Aorta (tissue), 5 donors: ENCODE measurements at regions of chr12 and their contacts with region 1.

Region 1: GRCh38 chr12:130427381-130427887 is 89.7 kb downstream of the PIWIL1 start:
- DNase-seq: peak in 1 of 2 donors; percentile 29
- ATAC-seq: no peak
- H3K4me3 ChIP-seq: no peak overlapping the region
- H3K27ac ChIP-seq: no peak overlapping the region
- H3K4me1 ChIP-seq: no peaks in the 10 kb centered on the region
- H3K27me3 ChIP-seq: no peaks in the 10 kb centered on the region

Region 2: GRCh38 chr12:130413909-130414308 is 13.5 kb before region 1 on chr12:
- intact Hi-C with region 1: loop called in 1 of 2 experiments (anchors 1 kb)
- DNase-seq: no peak
- ATAC-seq: no peak
- H3K4me3 ChIP-seq: no peak overlapping the region
- H3K27ac ChIP-seq: no peak overlapping the region
- H3K4me1 ChIP-seq: no peaks in the 10 kb centered on the region
- H3K27me3 ChIP-seq: no peaks in the 10 kb centered on the region

Region 3: DNA sequence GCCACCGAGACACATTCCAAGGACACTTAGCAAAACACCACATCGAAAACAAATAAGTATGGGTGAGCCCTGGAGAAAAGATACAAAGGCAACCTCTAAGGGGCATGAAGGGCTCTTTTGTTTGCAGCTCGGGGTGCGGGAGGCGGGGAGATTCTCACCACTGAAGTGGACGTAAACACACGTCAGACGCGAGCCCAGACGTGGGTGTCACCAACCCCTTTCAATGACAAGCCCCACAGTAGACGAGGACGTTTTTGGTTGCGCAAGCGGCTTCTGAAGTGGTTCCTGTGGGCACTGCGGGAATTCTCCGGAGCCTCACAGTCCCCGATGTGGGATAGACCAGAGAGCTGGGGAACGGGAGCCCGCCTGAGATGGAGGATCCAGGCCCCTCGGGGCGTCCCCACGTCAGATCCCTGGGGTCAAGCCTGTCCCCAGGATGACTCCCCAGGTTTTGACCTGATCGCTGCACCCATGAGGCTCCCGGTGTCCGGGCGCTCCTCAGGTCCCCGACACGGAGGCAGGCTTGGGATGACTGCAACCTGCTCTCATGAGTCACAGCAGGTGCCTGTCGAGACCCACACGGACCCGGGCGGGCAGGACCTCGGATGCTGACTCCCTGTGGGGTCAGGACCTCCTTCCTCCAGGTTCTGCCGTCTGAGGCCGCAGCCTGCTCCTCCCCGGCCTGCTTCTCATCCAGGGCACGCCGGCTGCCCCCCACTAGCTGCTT is 506.0 kb after region 1 on chr12:
- intact Hi-C with region 1: no loop called
- DNase-seq: no peak
- ATAC-seq: peak; percentile 38
- H3K4me3 ChIP-seq: no peak overlapping the region
- H3K27ac ChIP-seq: no peak overlapping the region
- H3K4me1 ChIP-seq: no peaks in the 10 kb centered on the region
- H3K27me3 ChIP-seq: no peaks in the 10 kb centered on the region